ENCODE measurements at regions of chr19 and their contacts with region 1.

Region 1: DNA sequence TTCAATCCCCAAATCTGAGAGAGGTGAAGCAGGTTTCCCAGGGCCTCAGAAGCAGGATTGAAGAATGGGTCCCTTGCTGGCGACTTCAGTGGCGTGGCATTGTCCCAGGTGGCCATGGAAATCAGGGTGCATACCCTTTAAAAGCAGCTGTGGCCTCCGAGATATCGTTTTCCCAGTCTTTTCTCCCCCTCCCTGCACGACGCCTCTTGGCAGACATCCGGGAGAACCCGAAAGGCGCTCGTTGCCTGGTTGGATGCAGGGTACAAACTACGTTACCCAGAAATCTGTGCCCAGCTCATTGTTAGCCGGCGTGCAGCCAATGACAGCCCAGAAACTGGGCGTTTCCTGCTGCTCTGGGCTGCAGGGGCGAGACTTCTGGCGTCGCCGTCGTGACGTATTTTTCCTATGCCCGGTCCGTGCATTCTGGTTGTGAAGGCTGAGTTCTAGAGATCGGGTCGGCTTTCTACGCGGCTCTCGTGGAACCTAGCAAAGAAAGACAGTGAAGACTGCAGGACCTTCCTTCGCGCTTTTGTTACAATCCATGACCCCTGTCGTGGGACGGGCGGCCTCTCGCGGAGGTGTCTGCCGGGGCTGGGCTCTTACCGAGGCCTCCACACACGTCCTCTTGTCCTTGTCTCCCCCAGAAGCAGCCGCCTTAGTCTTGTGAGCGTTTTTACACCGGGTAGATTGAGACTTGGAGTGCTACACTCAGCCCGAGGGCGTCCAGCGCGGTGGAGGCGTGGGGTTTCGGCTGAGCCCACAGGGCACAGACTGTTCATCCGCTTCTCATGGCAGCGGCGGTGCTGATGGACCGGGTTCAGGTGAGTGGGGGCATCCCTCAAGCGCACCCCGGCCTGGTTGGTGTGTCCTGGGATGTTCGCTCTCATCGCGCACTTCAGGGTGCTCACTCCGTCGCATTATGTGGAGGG is at the start of gene ZNF304:
- DNase-seq: peak; percentile 75 to 91
- ATAC-seq: peak; percentile 94 to 99 (median 98)
- H3K4me3 ChIP-seq: peak within 1 kb of the TSS; percentile 91
- H3K4me3 Mint-ChIP-seq: peak within 1 kb of the TSS; percentile 98
- H3K27ac ChIP-seq: peak within 1 kb of the TSS; percentile 77
- H3K27ac Mint-ChIP-seq: peak within 1 kb of the TSS; percentile 95 to 97
- H3K4me1 ChIP-seq: peaks cover 17% of the 10 kb centered on the region
- H3K4me1 Mint-ChIP-seq: peaks cover 32 to 33% of the 10 kb centered on the region in 2 donors
- H3K27me3 ChIP-seq: peaks cover 2% of the 10 kb centered on the region
- H3K27me3 Mint-ChIP-seq: peaks cover 8 to 16% of the 10 kb centered on the region in 2 donors
- CTCF ChIP-seq: no peak
- total RNA-seq, gene ZNF304: 6.6 to 10.7 (median 9.2) TPM

Region 2: DNA sequence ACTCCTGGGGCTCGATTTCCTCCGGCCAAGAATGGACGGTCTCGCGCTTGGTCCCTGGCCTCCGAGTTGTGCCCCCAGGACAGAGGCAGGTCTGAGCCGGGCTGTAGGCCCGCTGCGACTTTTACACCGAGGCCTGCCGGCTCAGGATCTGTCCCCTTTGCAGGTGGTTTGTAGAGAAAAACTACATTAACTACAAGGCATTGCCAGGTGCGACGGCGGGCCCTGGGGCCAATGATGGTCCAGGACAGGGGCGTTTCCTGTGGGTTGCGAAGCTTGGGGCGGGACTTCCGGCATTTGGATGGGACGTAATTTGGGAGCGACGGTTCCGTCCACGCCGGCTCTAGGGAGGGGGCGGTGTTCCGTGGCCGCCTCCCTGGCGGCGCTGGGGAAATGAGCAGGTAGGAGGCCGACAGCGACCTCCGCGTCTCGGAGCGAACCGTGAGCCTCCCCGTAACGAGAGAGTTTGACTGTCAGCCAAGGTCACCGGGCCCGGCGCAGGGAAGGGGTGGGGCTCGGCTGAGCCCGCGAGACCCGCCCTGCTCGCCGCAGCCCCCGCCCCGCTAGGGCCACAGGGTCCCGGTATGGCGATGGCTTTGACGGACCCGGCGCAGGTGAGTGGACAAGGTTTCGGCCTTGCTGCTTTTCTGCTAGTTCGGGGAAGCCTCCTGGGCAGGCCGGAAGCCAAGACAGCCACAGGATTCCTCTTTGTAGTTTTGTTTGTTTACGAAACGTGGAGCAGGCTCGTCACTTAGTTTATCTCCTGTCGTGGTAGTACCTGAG is 110.6 kb before region 1 on chr19 and contains the start of gene ZNF805:
- intact Hi-C with region 1: loop called (anchors 2 kb)
- DNase-seq: peak; percentile 89 to 98
- ATAC-seq: peak; percentile 92 to 97 (median 94)
- H3K4me3 ChIP-seq: peak within 1 kb of the TSS; percentile 78
- H3K4me3 Mint-ChIP-seq: peak within 1 kb of the TSS; percentile 95
- H3K27ac ChIP-seq: peak within 1 kb of the TSS; percentile 87
- H3K27ac Mint-ChIP-seq: peak within 1 kb of the TSS; percentile 94 to 96
- H3K4me1 ChIP-seq: peaks cover 22% of the 10 kb centered on the region
- H3K4me1 Mint-ChIP-seq: peaks cover 29 to 34% of the 10 kb centered on the region in 2 donors
- H3K27me3 ChIP-seq: no peaks in the 10 kb centered on the region
- H3K27me3 Mint-ChIP-seq: no peaks in the 10 kb centered on the region
- CTCF ChIP-seq: no peak
- total RNA-seq, gene ZNF805: 25.9 to 32.7 (median 31.0) TPM

Region 3: GRCh38 chr19:57279418-57280066 is 71.6 kb before region 1 on chr19:
- intact Hi-C with region 1: loop called (anchors 2 kb)
- DNase-seq: peak; percentile 79 to 92
- ATAC-seq: peak; percentile 77 to 89 (median 78)
- H3K4me3 ChIP-seq: peak overlapping the region; percentile 55
- H3K4me3 Mint-ChIP-seq: no peak overlapping the region
- H3K27ac ChIP-seq: peak overlapping the region; percentile 97
- H3K27ac Mint-ChIP-seq: no peak overlapping the region
- H3K4me1 ChIP-seq: peaks cover 30% of the 10 kb centered on the region
- H3K4me1 Mint-ChIP-seq: peaks cover 21% of the 10 kb centered on the region in 2 donors
- H3K27me3 ChIP-seq: no peaks in the 10 kb centered on the region
- H3K27me3 Mint-ChIP-seq: no peaks in the 10 kb centered on the region
- CTCF ChIP-seq: no peak

Region 4: GRCh38 chr19:57290970-57291369 is 60.2 kb before region 1 on chr19:
- intact Hi-C with region 1: no loop called
- DNase-seq: no peak
- ATAC-seq: no peak
- H3K4me3 ChIP-seq: no peak overlapping the region
- H3K4me3 Mint-ChIP-seq: no peak overlapping the region
- H3K27ac ChIP-seq: no peak overlapping the region
- H3K27ac Mint-ChIP-seq: no peak overlapping the region
- H3K4me1 ChIP-seq: no peaks in the 10 kb centered on the region
- H3K4me1 Mint-ChIP-seq: peaks cover 22 to 24% of the 10 kb centered on the region in 2 donors
- H3K27me3 ChIP-seq: no peaks in the 10 kb centered on the region
- H3K27me3 Mint-ChIP-seq: no peaks in the 10 kb centered on the region
- CTCF ChIP-seq: no peak

Region 5: GRCh38 chr19:57320180-57321084 is 30.7 kb before region 1 on chr19 and contains the start of gene ZNF543:
- intact Hi-C with region 1: loop called (anchors 1 kb)
- DNase-seq: peak; percentile 94 to 96
- ATAC-seq: peak; percentile 95 to 99 (median 98)
- H3K4me3 ChIP-seq: peak within 1 kb of the TSS; percentile 81
- H3K4me3 Mint-ChIP-seq: peak within 1 kb of the TSS; percentile 94
- H3K27ac ChIP-seq: peak within 1 kb of the TSS; percentile 94
- H3K27ac Mint-ChIP-seq: peak within 1 kb of the TSS; percentile 95 to 99
- H3K4me1 ChIP-seq: peaks cover 24% of the 10 kb centered on the region
- H3K4me1 Mint-ChIP-seq: peaks cover 27 to 35% of the 10 kb centered on the region in 2 donors
- H3K27me3 ChIP-seq: peaks cover 13% of the 10 kb centered on the region
- H3K27me3 Mint-ChIP-seq: peaks cover 26% of the 10 kb centered on the region in 2 donors
- CTCF ChIP-seq: no peak
- total RNA-seq, gene ZNF543: 4.7 to 7.2 (median 5.9) TPM

Region 6: GRCh38 chr19:57362997-57363705 is 12.0 kb after region 1 on chr19 and contains the starts of genes TRAPPC2B and ZNF547:
- intact Hi-C with region 1: loop called (anchors 1 kb)
- DNase-seq: peak; percentile 99 to 100
- ATAC-seq: peak; percentile 88 to 96 (median 90)
- H3K4me3 ChIP-seq: peak within 1 kb of the TSS; percentile 56
- H3K4me3 Mint-ChIP-seq: peak within 1 kb of the TSS; percentile 92
- H3K27ac ChIP-seq: peak within 1 kb of the TSS; percentile 93
- H3K27ac Mint-ChIP-seq: peak within 1 kb of the TSS; percentile 96 to 98
- H3K4me1 ChIP-seq: peaks cover 14% of the 10 kb centered on the region
- H3K4me1 Mint-ChIP-seq: peaks cover 18 to 19% of the 10 kb centered on the region in 2 donors
- H3K27me3 ChIP-seq: no peaks in the 10 kb centered on the region
- H3K27me3 Mint-ChIP-seq: no peaks in the 10 kb centered on the region
- CTCF ChIP-seq: no peak
- total RNA-seq, gene TRAPPC2B: 7.4 to 15.6 (median 13.7) TPM
- total RNA-seq, gene ZNF547: 0.48 to 1.2 (median 0.92) TPM

Region 7: GRCh38 chr19:57389730-57390598 is 38.8 kb after region 1 on chr19 and contains the start of gene ZNF548:
- intact Hi-C with region 1: loop called (anchors 5 kb)
- DNase-seq: peak; percentile 99
- ATAC-seq: peak; percentile 90 to 98 (median 92)
- H3K4me3 ChIP-seq: peak within 1 kb of the TSS; percentile 81
- H3K4me3 Mint-ChIP-seq: peak within 1 kb of the TSS; percentile 94
- H3K27ac ChIP-seq: peak within 1 kb of the TSS; percentile 95
- H3K27ac Mint-ChIP-seq: peak within 1 kb of the TSS; percentile 97 to 98
- H3K4me1 ChIP-seq: peaks cover 23% of the 10 kb centered on the region
- H3K4me1 Mint-ChIP-seq: peaks cover 37 to 48% of the 10 kb centered on the region in 2 donors
- H3K27me3 ChIP-seq: no peaks in the 10 kb centered on the region
- H3K27me3 Mint-ChIP-seq: peaks cover 0 to 4% of the 10 kb centered on the region in 2 donors
- CTCF ChIP-seq: no peak
- total RNA-seq, gene ZNF548: 75.5 to 104 (median 96.9) TPM

Region 8: DNA sequence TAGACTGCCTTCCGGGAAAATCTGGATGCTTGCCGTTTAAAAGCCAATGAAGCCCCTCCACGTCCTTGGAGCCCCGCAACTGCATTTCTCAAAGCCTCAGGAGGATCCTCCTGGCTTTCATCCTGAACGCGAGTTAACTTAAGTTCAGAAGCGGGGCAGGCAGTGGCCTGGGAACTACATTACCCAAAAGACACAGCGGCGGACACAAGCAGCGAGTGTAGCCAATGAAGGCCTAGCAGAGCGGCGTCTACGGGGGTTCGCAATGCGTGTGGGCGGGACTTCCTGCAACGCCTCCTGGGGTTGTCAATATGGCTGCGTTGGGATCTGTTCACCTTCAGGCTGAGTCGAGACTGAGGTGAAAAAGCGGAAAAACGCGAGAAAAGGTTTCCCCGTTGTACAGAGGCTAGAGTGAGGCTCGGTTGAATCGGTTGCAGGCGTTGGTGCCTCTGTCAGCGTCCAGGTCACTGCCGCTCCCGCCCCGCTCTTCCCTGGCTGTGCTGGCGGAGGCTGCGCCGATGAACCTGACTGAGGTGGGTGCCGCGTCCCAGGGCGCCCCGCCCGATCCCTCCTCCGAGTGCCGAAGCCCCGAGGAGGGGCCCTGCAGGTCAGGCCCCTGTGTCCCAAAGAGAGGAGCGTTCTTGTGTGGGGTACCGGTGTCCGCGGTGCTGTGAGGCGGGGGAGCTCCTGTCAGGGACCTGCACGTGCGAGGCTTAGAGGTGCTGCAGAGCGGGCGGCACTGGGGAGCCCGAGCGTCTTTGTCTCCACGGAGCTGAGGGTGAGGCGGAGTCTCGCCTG is 59.9 kb after region 1 on chr19 and contains the start of gene ZNF17:
- intact Hi-C with region 1: loop called (anchors 2 kb)
- DNase-seq: peak; percentile 84 to 96
- ATAC-seq: peak; percentile 99 to 100 (median 100)
- H3K4me3 ChIP-seq: peak within 1 kb of the TSS; percentile 86
- H3K4me3 Mint-ChIP-seq: peak within 1 kb of the TSS; percentile 94
- H3K27ac ChIP-seq: peak within 1 kb of the TSS; percentile 62
- H3K27ac Mint-ChIP-seq: peak within 1 kb of the TSS; percentile 84
- H3K4me1 ChIP-seq: peaks cover 18% of the 10 kb centered on the region
- H3K4me1 Mint-ChIP-seq: peaks cover 29 to 37% of the 10 kb centered on the region in 2 donors
- H3K27me3 ChIP-seq: no peaks in the 10 kb centered on the region
- H3K27me3 Mint-ChIP-seq: no peaks in the 10 kb centered on the region
- CTCF ChIP-seq: no peak
- total RNA-seq, gene ZNF17: 13.0 to 15.0 (median 13.3) TPM